Adrenal gland (tissue), 19 donors: ENCODE measurements at regions of chr9 and their contacts with region 1.

Region 1: DNA sequence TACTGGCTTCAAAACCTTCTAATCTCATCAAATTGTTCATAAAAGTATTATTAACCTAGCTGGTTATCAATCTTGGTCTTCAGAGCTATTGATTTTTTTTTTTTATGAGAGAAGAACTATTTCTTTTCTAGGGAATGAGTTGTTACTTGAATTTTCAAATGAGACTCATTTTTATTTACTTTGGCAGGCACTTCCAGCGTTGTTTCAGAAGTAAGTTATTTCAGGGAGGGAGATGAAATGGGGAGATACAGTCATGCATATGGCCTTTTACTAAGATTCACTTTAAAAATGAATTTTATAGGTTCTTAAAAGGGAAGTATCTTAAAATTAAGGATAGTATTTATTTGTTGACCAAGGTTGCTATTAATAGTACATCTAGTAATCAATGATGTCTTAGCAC is 129.6 kb downstream of the IZUMO3 start:
- DNase-seq: no peak
- H3K4me3 ChIP-seq: no peak overlapping the region
- H3K27ac ChIP-seq: no peak overlapping the region
- H3K4me1 ChIP-seq: no peaks in the 10 kb centered on the region
- H3K27me3 ChIP-seq: no peaks in the 10 kb centered on the region
- CTCF ChIP-seq: no peak
- POLR2A ChIP-seq: no peak

Region 2: DNA sequence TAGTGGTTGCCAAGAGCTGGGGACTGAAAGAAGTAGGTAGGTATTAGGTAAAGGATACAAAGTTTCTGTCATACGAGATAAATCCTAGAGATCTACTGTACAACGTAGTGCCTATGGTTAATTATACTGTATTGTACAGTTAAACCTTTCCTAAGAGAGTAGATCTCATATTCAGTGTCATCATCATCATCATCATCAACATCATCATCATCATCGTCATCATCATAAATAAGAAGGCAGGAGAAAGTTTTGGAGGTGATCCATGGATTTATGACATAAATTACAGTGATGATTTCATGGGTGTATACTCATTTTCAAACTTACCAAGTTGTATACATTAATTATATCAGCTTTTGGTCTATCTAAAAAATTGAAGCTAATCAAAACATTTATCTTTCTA is 108.1 kb before region 1 on chr9:
- intact Hi-C with region 1: no loop called
- DNase-seq: no peak
- H3K4me3 ChIP-seq: no peak overlapping the region
- H3K27ac ChIP-seq: no peak overlapping the region
- H3K4me1 ChIP-seq: no peaks in the 10 kb centered on the region
- H3K27me3 ChIP-seq: no peaks in the 10 kb centered on the region
- CTCF ChIP-seq: no peak
- POLR2A ChIP-seq: no peak

Region 3: DNA sequence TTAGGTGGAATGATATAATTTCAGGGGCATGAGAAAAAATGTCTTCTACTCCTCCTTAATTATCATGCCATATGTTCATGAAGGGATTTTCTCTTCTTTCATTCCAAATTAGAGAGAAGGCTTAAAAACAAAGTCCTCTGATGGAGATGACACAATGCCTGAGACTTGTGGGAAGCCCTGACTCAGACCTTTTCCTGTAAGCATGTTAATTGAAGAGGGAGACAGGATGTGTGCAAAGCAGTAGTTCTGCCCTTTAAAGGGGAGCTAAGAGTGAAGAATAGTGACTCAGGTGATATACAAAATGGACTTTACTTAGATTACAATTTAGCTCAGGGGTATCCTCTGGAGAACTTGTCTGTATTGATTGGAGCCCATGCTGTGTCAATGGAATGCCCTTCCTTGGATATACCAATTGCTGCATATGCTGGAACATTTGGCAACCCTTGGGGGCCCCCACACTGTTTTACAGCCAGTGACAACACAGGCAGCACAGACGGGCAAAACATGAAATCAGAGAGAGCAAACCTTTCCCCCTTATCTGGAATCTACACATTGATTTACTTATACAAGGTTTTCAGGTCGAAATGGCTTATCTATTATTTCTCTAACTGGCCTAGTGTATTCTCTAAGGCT is 48.3 kb after region 1 on chr9:
- intact Hi-C with region 1: loop called in 1 of 2 experiments (anchors 5 kb)
- DNase-seq: no peak
- H3K4me3 ChIP-seq: no peak overlapping the region
- H3K27ac ChIP-seq: no peak overlapping the region
- H3K4me1 ChIP-seq: no peaks in the 10 kb centered on the region
- H3K27me3 ChIP-seq: no peaks in the 10 kb centered on the region
- CTCF ChIP-seq: no peak
- POLR2A ChIP-seq: no peak